ENCODE measurements at regions of chr9 and their contacts with region 1.

Region 1: GRCh38 chr9:37079370-37080164 is 40.8 kb upstream of the ZCCHC7 start:
- DNase-seq: peak; percentile 95
- H3K4me3 Mint-ChIP-seq: peak overlapping the region; percentile 89
- H3K27ac Mint-ChIP-seq: peak overlapping the region; percentile 95
- H3K4me1 Mint-ChIP-seq: peaks cover 39% of the 10 kb centered on the region
- H3K27me3 Mint-ChIP-seq: no peaks in the 10 kb centered on the region

Region 2: DNA sequence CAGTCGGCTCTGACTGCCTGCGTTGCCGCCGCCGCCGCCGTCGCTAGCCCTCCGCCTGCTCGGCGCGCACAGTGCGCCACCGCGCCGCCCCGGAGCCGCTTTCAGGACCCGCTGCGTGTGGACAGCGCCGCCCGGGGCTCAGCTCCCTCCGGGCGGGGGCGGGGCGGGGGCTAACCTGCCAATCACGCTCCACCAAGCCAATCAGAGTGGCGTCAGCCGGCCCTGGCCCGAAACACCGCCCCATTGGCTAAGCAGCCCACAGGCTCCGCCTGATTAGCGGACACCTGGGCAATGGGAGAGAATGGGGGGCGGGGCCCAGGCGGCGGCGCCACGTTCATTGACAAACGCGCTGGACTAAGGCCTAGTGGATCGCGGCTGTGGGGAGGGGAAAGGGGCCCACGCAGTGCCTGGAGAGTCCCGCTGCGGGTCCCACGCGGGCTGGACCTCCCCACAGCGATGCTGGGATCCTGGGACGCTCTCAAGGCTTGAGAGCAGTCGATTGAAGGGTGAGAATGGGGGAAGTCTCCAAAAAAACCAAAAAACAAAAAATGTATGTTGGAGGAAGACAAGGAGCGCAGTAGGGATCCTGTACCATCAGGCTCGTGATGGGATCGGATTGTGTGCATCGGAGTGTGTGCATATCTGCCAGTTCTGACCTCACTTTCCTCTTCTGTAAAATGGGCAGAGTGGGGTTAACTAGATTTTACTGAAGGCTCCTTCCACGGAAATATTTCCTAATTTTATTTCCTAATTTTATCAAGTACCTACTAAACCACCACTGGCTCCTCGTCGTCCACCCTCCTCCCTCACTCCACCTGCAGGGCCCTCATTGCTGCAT is 51.8 kb before region 1 on chr9:
- CTCF ChIA-PET with region 1: no interaction called
- intact Hi-C with region 1: loop called (anchors 1 kb)
- DNase-seq: peak; percentile 95
- H3K4me3 Mint-ChIP-seq: peak overlapping the region; percentile 66
- H3K27ac Mint-ChIP-seq: no peak overlapping the region
- H3K4me1 Mint-ChIP-seq: peaks cover 48% of the 10 kb centered on the region
- H3K27me3 Mint-ChIP-seq: peaks cover 85% of the 10 kb centered on the region

Region 3: GRCh38 chr9:37036776-37037502 is 42.6 kb before region 1 on chr9:
- CTCF ChIA-PET with region 1: no interaction called
- intact Hi-C with region 1: loop called (anchors 1 kb)
- DNase-seq: peak; percentile 51
- H3K4me3 Mint-ChIP-seq: peak overlapping the region; percentile 81
- H3K27ac Mint-ChIP-seq: no peak overlapping the region
- H3K4me1 Mint-ChIP-seq: peaks cover 30% of the 10 kb centered on the region
- H3K27me3 Mint-ChIP-seq: peaks cover 80% of the 10 kb centered on the region

Region 4: GRCh38 chr9:37187713-37188439 is 108.3 kb after region 1 on chr9:
- CTCF ChIA-PET with region 1: no interaction called
- intact Hi-C with region 1: loop called (anchors 5 kb)
- DNase-seq: peak; percentile 18
- H3K4me3 Mint-ChIP-seq: no peak overlapping the region
- H3K27ac Mint-ChIP-seq: peak overlapping the region; percentile 85
- H3K4me1 Mint-ChIP-seq: peaks cover 52% of the 10 kb centered on the region
- H3K27me3 Mint-ChIP-seq: no peaks in the 10 kb centered on the region

Region 5: GRCh38 chr9:37197158-37198038 is 117.8 kb after region 1 on chr9:
- CTCF ChIA-PET with region 1: no interaction called
- intact Hi-C with region 1: loop called (anchors 5 kb)
- DNase-seq: peak; percentile 27
- H3K4me3 Mint-ChIP-seq: peak overlapping the region; percentile 19
- H3K27ac Mint-ChIP-seq: peak overlapping the region; percentile 82
- H3K4me1 Mint-ChIP-seq: peaks cover 70% of the 10 kb centered on the region
- H3K27me3 Mint-ChIP-seq: no peaks in the 10 kb centered on the region

Region 6: GRCh38 chr9:37302277-37302676 is 222.7 kb after region 1 on chr9:
- CTCF ChIA-PET with region 1: interaction called, 3 read pairs
- intact Hi-C with region 1: loop called (anchors 1 kb)
- DNase-seq: peak; percentile 70
- H3K4me3 Mint-ChIP-seq: peak overlapping the region; percentile 25
- H3K27ac Mint-ChIP-seq: peak overlapping the region; percentile 92
- H3K4me1 Mint-ChIP-seq: peaks cover 59% of the 10 kb centered on the region
- H3K27me3 Mint-ChIP-seq: no peaks in the 10 kb centered on the region

Region 7: DNA sequence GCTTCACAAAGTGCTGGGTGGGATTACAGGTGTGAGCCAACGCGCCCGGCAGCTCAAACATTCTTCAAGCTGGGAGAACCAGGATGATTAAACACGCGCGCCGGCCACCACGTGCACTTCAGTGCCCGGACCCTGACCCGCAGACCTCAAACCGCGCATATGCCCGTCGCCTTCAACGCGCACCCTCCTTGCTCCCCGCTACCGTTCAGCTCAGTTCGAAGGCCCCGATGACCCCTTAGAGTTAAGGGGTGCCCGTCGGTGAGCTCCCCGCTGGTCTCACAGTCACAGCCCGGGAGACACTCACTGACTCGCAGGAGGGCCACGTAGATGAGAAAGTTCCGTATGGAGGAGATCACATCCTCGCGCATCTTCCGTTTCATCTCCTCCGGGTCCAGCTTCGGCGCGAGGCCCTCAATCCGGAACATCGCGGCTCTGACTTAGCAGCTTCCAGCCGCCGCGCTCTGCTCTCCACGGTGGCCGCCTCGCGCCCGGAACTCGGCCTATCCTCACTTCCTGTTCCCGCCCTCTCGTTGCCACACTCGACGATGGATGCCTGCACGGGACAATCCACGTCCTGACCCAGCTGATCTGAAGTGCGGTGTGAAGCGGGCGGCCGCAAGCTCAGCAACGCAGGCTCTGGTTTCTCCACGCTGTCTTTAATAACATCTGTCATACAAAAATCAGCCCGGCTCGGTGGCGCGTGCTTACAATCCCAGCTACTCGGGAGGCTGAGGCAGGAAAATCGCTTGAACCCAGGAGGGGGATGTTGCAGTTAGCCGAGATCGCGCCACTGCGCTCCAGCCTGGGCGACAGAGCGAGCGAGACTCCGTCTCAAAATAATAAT is 512.8 kb after region 1 on chr9 and contains the start of gene TOMM5:
- CTCF ChIA-PET with region 1: no interaction called
- intact Hi-C with region 1: loop called (anchors 5 kb)
- DNase-seq: peak; percentile 96
- H3K4me3 Mint-ChIP-seq: peak within 1 kb of the TSS; percentile 92
- H3K27ac Mint-ChIP-seq: peak within 1 kb of the TSS; percentile 93
- H3K4me1 Mint-ChIP-seq: peaks cover 37% of the 10 kb centered on the region
- H3K27me3 Mint-ChIP-seq: peaks cover 3% of the 10 kb centered on the region
- total RNA-seq, gene TOMM5: 136 to 140 TPM

Measured in activated naive CD4-positive, alpha-beta T cell treated with anti-CD3 and anti-CD28 coated beads for 36 hours (primary cell).